Heart left ventricle (tissue), 16 donors: ENCODE measurements at regions of chr3 and their contacts with region 1.

Region 1: DNA sequence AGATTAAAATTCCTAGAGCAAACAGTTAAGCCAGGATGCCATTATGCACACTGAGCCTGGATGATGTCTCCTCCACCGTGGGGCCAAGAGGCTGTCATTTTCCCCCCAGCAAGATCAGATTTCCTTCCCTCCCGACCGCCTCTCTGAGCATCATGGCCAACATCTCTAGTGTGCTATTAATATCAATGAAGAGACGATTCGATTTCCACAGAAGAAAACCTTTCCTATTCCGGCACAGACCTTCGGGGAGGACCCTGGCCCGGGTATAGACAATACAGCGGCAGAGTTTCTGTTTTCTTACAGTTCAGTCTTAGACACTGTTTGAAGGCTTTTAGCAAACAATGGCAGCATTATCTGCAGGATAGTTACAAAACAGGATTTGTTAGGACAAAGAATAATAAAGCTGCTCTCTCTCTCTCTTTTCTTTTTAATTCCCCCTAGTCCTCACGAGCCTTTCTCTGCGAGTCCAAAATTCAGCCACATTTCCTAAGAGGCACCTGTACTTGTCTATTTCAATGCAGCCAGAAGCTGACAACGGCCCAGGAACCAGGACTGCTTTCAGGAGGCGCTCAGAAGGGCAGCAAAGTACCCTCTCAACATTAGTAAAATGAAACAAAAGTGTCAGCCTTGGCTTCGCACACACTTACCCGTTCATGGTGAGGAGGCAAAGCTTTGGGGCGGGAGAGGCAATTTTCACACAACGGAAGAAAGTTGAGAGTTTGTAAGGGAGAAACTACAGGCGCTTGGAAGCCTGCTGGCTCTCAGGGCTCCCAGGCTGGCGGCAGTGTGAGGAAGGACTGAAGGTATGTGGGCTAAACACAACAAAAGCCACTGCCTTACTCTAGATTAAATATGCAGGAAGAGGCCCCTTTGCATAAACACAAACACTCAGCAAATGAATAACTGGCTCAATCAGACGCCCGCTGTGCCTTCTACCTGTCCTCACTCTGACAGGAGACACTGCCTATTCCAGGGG is 278.0 kb downstream of the FOXP1 start:
- DNase-seq: peak in 4 of 5 donors; percentile 37 to 49 (median 45)
- ATAC-seq: peak; percentile 82 to 94 (median 86)
- H3K4me3 ChIP-seq: peak overlapping the region in 11 of 12 donors; percentile 2 to 51 (median 45)
- H3K27ac ChIP-seq: peak overlapping the region; percentile 45 to 82 (median 72)
- H3K4me1 ChIP-seq: peaks cover 0 to 48% (median 26%) of the 10 kb centered on the region in 12 donors
- H3K27me3 ChIP-seq: no peaks in the 10 kb centered on the region
- CTCF ChIP-seq: no peak
- POLR2A ChIP-seq: no peak

Region 2: DNA sequence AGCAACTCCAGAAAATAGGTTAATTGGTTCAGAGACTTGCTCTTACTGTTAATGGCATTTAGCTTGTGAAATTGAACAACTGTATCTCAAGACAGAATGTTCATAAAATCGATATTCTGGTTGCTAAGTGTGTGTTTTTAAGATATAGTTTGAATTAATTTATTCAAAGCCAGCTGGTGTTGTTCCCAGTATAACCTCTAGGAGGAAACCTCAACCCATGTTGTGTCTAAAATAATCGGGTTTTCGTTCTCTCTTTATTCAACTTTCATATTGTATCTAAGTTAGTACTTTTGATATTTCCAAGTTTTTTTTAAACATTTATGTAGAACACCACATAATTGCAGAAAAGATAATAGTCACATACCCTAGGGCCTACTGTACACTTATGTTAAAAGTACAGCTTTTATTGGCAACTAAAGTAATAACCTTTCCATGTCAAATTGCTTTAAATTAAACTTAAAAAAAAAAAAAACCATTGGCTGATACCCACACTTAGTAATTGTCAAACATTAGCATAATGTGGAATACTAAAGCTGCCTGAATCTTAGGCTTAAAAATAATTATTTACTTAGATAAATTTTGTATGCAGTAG is 1215.1 kb before region 1 on chr3:
- intact Hi-C with region 1: no loop called
- DNase-seq: no peak
- ATAC-seq: no peak
- H3K4me3 ChIP-seq: no peak overlapping the region
- H3K27ac ChIP-seq: no peak overlapping the region
- H3K4me1 ChIP-seq: no peaks in the 10 kb centered on the region
- H3K27me3 ChIP-seq: peaks cover 0 to 7% (median 0%) of the 10 kb centered on the region in 9 donors
- CTCF ChIP-seq: peak; percentile 45 to 74 (median 62)
- POLR2A ChIP-seq: no peak

Region 3: DNA sequence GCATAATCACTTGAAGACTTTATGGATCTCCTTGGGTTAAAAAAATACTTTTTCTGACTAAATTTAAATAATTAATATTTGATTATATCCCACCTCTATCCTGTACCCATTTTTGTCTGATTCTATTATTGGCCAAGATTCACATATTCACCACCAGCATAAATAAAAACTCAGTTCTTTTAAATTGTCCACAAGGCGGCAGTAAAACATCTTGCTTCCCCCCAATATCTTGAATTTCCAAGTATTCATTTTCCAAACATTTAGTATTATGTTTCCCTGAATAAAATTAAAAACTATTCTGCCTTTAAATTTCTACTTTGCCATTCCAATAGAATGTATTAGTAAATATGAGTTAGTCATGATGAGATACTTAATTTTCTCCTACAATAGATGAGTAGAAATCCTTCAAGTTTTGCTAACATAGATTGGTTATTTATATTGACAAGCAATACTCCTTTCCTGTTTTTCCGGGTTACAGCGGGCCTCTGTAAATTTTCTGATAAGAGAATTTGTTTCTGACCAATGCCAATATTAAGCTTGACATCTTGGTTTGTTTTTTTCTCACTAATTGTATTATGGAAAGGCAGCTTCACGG is 774.4 kb before region 1 on chr3:
- intact Hi-C with region 1: loop called in 2 of 10 experiments (anchors 10 kb)
- DNase-seq: no peak
- ATAC-seq: no peak
- H3K4me3 ChIP-seq: no peak overlapping the region
- H3K27ac ChIP-seq: no peak overlapping the region
- H3K4me1 ChIP-seq: no peaks in the 10 kb centered on the region
- H3K27me3 ChIP-seq: peaks cover 0 to 5% (median 0%) of the 10 kb centered on the region in 9 donors
- CTCF ChIP-seq: peak in 11 of 12 donors; percentile 26 to 71 (median 52)
- POLR2A ChIP-seq: no peak

Region 4: GRCh38 chr3:70716832-70717231 is 588.7 kb before region 1 on chr3:
- intact Hi-C with region 1: loop called in 5 of 10 experiments (anchors 5 to 10 kb)
- DNase-seq: peak in 3 of 5 donors; percentile 15 to 34 (median 33)
- ATAC-seq: peak in 3 of 4 donors; percentile 62 to 78 (median 70)
- H3K4me3 ChIP-seq: no peak overlapping the region
- H3K27ac ChIP-seq: no peak overlapping the region
- H3K4me1 ChIP-seq: peaks cover 0 to 7% (median 0%) of the 10 kb centered on the region in 12 donors
- H3K27me3 ChIP-seq: no peaks in the 10 kb centered on the region
- CTCF ChIP-seq: peak; percentile 32 to 74 (median 52)
- POLR2A ChIP-seq: no peak

Region 5: DNA sequence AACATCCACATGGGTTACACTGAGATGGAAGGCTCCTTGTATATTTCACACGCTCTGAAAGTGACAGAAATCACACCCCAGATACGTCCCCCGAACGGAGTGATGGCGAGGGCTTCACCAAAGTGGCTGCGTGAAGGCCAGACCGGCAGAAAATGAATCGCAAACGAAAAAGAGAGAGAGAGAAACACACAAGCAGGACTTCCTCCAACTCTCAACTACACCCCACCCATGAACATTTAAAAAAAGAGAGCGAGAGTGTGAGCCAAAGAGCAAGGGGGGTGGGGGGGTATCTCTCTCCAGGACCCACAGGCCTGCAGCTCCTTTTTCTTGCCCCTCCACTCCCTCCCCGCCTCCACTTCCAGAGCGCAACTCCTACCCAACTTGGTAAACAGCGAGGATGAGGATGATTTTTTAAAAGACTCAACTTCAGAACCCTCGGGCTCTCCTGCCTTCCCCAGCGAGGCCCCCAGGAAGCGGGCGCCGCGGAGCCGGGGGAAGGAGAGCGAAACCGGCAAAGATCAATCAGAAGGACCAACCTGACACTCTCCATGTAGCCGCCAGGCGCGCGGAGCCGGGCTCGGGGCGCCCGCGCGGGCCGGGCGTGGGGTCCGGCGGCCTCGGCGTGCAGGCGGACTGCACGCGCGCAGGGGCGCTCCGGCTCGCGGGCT is 241.1 kb before region 1 on chr3:
- intact Hi-C with region 1: loop called in 4 of 10 experiments (anchors 5 to 10 kb)
- DNase-seq: peak in 3 of 5 donors; percentile 36 to 47 (median 39)
- ATAC-seq: peak; percentile 20 to 60 (median 52)
- H3K4me3 ChIP-seq: peak overlapping the region; percentile 28 to 87 (median 75)
- H3K27ac ChIP-seq: peak overlapping the region; percentile 91 to 99 (median 97)
- H3K4me1 ChIP-seq: peaks cover 5 to 74% (median 51%) of the 10 kb centered on the region in 12 donors
- H3K27me3 ChIP-seq: no peaks in the 10 kb centered on the region
- CTCF ChIP-seq: peak in 2 of 12 donors; percentile 1 to 17
- POLR2A ChIP-seq: no peak

Region 6: GRCh38 chr3:71652781-71653413 is 347.4 kb after region 1 on chr3:
- intact Hi-C with region 1: loop called in 2 of 10 experiments (anchors 5 kb)
- DNase-seq: peak in 2 of 5 donors; percentile 24 to 48
- ATAC-seq: peak in 3 of 4 donors; percentile 67 to 79 (median 79)
- H3K4me3 ChIP-seq: no peak overlapping the region
- H3K27ac ChIP-seq: peak overlapping the region in 1 of 12 donors; percentile 13
- H3K4me1 ChIP-seq: peaks cover 0 to 8% (median 1%) of the 10 kb centered on the region in 12 donors
- H3K27me3 ChIP-seq: no peaks in the 10 kb centered on the region
- CTCF ChIP-seq: peak; percentile 21 to 68 (median 50)
- POLR2A ChIP-seq: no peak